HEK293T (cell line): ENCODE measurements at regions of chr20 and their contacts with region 1.

Region 1: DNA sequence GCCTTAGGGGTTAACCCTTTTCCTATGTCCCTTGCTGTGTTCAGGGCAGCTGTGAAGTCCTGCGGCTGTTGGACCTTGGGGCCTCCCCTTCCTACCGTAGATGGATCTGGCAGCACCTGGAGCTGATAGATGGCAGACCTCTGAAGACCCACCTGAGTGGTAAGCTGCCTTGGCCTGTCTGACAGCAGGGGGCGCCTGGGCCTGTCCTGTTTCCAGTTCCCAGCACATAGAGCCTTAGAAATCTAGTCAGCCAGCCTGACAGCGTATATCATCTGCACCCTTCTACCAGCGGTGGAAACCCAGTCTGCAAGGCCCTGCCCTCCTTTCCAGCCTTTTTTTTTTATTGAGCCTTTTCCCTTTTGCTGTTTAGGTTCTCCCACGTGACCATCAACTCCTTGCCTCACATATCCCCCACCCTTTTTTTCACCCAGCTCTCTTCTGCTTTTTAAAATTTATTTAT is 26.6 kb downstream of the CNBD2 start:
- DNase-seq: peak; percentile 78

Region 2: GRCh38 chr20:35726759-35727711 is 268.0 kb before region 1 on chr20:
- CTCF ChIA-PET with region 1: no interaction called
- POLR2A ChIA-PET with region 1: no interaction called
- DNase-seq: no peak

Region 3: DNA sequence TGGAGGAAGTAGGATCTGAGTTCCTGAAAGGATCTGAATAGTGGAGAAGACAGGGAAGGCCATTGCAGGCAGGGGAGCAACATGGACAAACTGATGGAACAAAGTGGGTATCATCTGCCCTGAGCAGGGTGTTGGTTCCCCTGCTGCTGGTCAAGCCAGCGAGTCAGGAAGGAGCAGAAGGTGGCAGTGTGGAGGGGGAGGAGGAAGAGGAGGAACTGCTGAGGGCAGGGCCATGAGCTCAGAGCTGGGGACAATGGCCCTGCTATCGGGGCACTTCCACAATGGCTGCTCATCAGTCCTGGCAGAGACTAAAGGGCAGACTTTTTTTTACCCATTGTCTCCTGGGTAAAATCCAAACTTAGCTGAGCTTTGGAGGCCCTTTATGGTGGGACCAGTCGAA is 13.1 kb before region 1 on chr20:
- CTCF ChIA-PET with region 1: interaction called, 19 read pairs
- POLR2A ChIA-PET with region 1: no interaction called
- DNase-seq: no peak

Region 4: DNA sequence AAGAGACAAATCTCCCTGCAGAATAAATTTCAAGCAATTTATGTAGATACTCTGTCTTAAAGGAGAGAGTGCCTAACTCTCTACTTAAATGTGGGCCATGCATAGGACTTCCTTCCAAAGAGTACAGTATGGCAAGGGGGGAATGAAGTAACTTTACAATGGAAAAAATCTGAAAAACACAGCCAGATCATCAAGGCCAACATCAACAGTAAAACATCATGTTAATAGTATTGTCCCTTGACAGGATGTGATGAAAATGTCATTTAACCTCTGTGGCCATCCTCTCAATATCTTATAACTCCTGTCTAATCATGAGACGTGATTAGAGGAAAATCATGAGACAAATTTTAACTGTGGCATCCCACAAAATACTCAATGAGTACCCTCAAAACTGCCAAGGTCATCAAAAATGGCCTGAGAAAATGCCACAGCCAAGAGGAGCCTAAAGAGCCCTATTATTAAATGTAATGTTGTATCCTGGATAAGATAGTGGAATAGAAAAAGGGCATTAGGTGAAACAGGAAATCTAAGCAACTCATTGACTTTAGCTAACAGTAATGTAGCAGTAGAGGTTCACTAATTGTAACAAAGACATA is 20.9 kb after region 1 on chr20:
- CTCF ChIA-PET with region 1: interaction called, 10 read pairs
- POLR2A ChIA-PET with region 1: no interaction called
- DNase-seq: no peak

Region 5: DNA sequence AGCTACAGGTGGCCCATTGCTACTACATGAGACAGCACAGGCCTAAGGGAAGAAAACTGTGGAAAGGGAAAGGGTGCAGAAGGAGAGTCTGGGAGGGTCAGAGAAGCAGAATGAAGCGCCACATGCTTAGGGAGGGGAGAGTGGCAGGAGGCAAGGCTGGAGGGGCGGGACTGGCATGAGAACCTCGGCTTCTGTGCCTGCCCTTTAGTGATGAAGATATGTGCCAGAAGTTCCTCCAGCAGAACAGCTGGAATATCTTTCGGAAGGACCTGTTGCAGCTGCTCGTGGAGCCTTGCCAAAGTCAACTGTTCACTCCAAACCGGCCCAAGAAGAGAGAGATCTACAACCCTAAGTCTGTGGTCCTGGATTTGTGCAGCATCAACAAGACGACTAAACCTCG is 35.1 kb after region 1 on chr20:
- CTCF ChIA-PET with region 1: no interaction called
- POLR2A ChIA-PET with region 1: no interaction called
- DNase-seq: no peak

Region 6: DNA sequence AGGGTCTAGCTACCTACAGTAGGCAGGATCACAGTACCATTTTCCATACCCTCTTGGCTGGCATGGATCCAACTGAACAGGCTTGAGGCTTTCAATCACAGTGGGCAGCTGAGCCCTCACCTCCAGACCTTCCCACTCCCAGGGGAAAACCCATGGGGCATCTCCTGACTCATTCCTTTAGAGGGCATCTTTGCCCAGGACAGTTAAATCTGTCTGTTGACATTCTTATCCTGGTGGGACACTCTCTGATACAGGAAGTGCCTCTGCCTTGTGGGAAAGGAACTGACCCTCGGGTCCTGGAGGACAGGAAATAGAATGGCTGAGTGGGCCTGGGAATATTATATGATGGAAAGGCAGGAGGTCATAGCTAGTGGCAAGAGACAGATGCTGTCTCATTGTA is 149.3 kb after region 1 on chr20:
- CTCF ChIA-PET with region 1: interaction called, 45 read pairs
- POLR2A ChIA-PET with region 1: no interaction called
- DNase-seq: no peak